GM12878 (cell line): ENCODE measurements at regions of chr10 and their contacts with region 1.

Region 1: DNA sequence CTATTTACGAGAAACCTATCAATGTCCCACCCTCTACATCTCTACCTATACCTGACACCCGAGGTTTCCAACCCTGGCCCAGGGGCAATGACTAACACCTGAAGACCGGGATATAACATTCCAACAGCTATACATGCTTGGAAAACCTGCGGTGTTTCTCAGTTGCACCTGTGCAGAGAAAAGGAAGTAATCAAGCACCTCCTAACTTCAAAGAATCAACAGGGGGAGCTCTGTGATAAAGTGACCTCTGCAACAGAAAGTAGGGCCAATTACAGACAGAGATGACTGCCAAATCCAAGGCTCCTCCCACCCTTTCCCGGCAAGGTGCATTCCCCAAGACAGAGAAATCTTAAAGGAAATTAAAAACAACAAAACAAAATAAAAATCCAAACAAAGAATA is 41.3 kb downstream of the CCDC6 start:
- DNase-seq: no peak
- ATAC-seq: peak; percentile 91
- H3K4me3 ChIP-seq: no peak overlapping the region
- H3K27ac ChIP-seq: no peak overlapping the region
- H3K4me1 ChIP-seq: peaks cover 7% of the 10 kb centered on the region
- H3K27me3 ChIP-seq: no peaks in the 10 kb centered on the region
- CTCF ChIP-seq: peak; percentile 54 to 75 (median 58)
- EP300 ChIP-seq: no peak
- POLR2A ChIP-seq: no peak
- RAD21 ChIP-seq: peak; percentile 90

Region 2: DNA sequence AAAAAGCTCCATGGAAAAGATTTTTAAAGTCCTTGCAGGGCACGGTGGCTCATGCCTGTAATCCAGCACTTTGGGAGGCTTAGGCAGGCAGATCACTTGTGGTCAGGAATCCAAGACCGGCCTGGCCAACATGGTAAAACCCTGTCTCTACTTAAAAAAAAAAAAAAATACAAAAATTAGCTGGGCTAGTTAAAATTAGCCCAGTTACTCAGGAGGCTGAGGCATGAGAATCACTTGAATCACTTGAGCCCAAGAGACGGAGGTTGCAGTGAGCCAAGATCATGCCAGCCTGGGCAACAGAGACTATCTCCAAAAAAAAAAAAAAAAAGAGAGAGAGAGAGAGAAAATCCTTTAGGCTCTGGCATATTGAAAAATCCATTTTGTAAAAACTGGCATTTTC is 20.7 kb before region 1 on chr10:
- CTCF ChIA-PET with region 1: interaction called, 12 read pairs
- POLR2A ChIA-PET with region 1: no interaction called
- RAD21 ChIA-PET with region 1: interaction called, 4 read pairs
- SMC1A ChIA-PET with region 1: interaction called, 5 read pairs
- in situ Hi-C with region 1: no loop called
- intact Hi-C with region 1: no loop called
- DNase-seq: no peak
- ATAC-seq: no peak
- H3K4me3 ChIP-seq: no peak overlapping the region
- H3K27ac ChIP-seq: no peak overlapping the region
- H3K4me1 ChIP-seq: no peaks in the 10 kb centered on the region
- H3K27me3 ChIP-seq: no peaks in the 10 kb centered on the region
- CTCF ChIP-seq: no peak
- EP300 ChIP-seq: no peak
- POLR2A ChIP-seq: no peak
- RAD21 ChIP-seq: no peak

Region 3: DNA sequence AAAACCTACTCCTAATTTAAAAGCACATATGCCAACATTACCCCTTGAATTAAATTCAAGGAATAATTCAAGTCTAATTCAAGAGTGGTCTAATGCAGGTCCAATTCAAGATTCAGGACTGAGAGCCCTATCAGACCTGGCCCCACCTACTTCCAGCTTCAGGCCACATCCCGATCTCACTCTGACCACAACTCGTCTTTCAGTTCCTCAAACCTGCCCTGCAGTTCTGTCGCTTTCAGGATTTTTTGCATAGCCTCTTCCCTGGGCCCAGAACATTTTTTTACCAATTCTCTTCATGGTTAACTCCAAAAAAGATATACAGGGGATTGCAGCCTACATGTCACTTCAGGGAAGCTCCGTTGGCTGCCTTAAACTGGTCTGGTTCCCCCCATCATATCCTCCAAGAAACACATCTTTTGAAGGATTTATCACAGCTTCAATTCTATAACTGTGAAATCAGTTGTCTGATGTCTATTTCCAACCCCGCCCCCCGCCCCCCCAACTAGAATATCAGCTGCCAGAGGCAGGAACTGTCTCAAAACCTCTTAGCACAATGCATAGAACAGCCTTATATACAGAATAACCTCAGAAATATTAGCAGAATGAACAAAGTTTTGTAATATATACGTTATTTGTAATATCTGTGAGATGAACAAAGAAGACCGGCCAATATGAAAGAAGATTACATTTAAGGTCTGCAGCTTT is 20.5 kb after region 1 on chr10:
- CTCF ChIA-PET with region 1: interaction called, 14 read pairs
- POLR2A ChIA-PET with region 1: interaction called, 3 read pairs
- RAD21 ChIA-PET with region 1: interaction called, 4 read pairs
- SMC1A ChIA-PET with region 1: interaction called, 3 read pairs
- in situ Hi-C with region 1: no loop called
- intact Hi-C with region 1: no loop called
- DNase-seq: peak; percentile 85
- ATAC-seq: peak; percentile 80
- H3K4me3 ChIP-seq: peak overlapping the region; percentile 30
- H3K27ac ChIP-seq: peak overlapping the region; percentile 54
- H3K4me1 ChIP-seq: peaks cover 41% of the 10 kb centered on the region
- H3K27me3 ChIP-seq: no peaks in the 10 kb centered on the region
- CTCF ChIP-seq: no peak
- EP300 ChIP-seq: peak; percentile 69 to 95
- POLR2A ChIP-seq: no peak
- RAD21 ChIP-seq: no peak

Region 4: DNA sequence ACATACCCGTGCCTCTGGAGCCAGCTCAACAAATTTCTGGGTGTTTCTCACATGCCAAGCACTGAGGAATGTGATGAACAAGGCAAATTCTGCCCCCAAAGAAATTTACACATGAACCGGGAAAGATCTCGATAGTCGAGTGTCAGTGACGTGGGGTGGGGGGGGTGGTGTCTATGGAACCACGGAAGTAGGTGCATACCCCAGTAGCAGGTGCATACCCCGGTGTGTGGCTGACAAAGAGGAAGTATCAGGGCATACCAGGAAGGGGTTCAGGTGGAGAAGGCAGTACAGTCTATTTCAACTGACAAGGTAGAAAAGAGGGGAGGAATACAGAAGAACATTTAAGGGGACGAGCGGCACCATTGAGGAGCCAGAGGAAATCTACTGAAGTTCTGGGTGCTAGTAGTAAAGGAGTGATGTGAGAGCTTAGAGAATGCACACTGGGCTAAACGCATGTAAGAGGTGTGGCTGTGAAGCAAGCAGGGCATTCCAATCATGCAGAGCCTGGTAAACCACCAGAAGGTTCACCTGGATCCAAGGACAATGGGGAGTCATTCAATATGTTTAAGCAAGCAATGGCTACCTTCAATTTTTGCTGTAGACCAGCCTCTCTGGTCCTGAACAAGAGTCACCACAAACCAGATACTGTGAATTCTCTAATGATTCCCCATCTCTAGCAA is 35.1 kb after region 1 on chr10:
- CTCF ChIA-PET with region 1: interaction called, 181 read pairs
- POLR2A ChIA-PET with region 1: no interaction called
- RAD21 ChIA-PET with region 1: interaction called, 140 read pairs
- SMC1A ChIA-PET with region 1: interaction called, 143 read pairs
- in situ Hi-C with region 1: no loop called
- intact Hi-C with region 1: no loop called
- DNase-seq: no peak
- ATAC-seq: no peak
- H3K4me3 ChIP-seq: no peak overlapping the region
- H3K27ac ChIP-seq: no peak overlapping the region
- H3K4me1 ChIP-seq: peaks cover 17% of the 10 kb centered on the region
- H3K27me3 ChIP-seq: no peaks in the 10 kb centered on the region
- CTCF ChIP-seq: no peak
- EP300 ChIP-seq: no peak
- POLR2A ChIP-seq: no peak
- RAD21 ChIP-seq: no peak

Region 5: GRCh38 chr10:59970396-59971368 is 105.6 kb after region 1 on chr10:
- CTCF ChIA-PET with region 1: interaction called, 11 read pairs
- POLR2A ChIA-PET with region 1: interaction called, 4 read pairs
- RAD21 ChIA-PET with region 1: interaction called, 3 read pairs
- SMC1A ChIA-PET with region 1: interaction called, 3 read pairs
- in situ Hi-C with region 1: no loop called
- intact Hi-C with region 1: no loop called
- DNase-seq: no peak
- ATAC-seq: peak; percentile 77
- H3K4me3 ChIP-seq: no peak overlapping the region
- H3K27ac ChIP-seq: no peak overlapping the region
- H3K4me1 ChIP-seq: 0 out of 2 replicates have a peak, but pooled peaks cover 5% of the 10 kb centered on the region
- H3K27me3 ChIP-seq: no peaks in the 10 kb centered on the region
- CTCF ChIP-seq: 0 out of 6 replicates have a peak, but pooled peaks of 1 of the 3 experiments have one; percentile 2
- EP300 ChIP-seq: no peak
- POLR2A ChIP-seq: no peak
- RAD21 ChIP-seq: no peak

Region 6: GRCh38 chr10:60032723-60033122 is 167.6 kb after region 1 on chr10:
- CTCF ChIA-PET with region 1: interaction called, 30 read pairs
- POLR2A ChIA-PET with region 1: no interaction called
- RAD21 ChIA-PET with region 1: interaction called, 22 read pairs
- SMC1A ChIA-PET with region 1: interaction called, 46 read pairs
- in situ Hi-C with region 1: no loop called
- intact Hi-C with region 1: loop called (anchors 2 kb)
- DNase-seq: peak; percentile 23
- ATAC-seq: peak; percentile 83
- H3K4me3 ChIP-seq: no peak overlapping the region
- H3K27ac ChIP-seq: no peak overlapping the region
- H3K4me1 ChIP-seq: peaks cover 15% of the 10 kb centered on the region
- H3K27me3 ChIP-seq: no peaks in the 10 kb centered on the region; a peak in 1 of 4 replicates
- CTCF ChIP-seq: peak; percentile 56 to 71 (median 68)
- EP300 ChIP-seq: no peak
- POLR2A ChIP-seq: no peak
- RAD21 ChIP-seq: peak; percentile 79